HAP-1 (cell line): ENCODE measurements at regions of chr19 and their contacts with region 1.

Region 1: GRCh38 chr19:48588670-48589399 is 17.7 kb upstream of the SPACA4 start:
- DNase-seq: peak; percentile 82 to 96
- H3K4me3 ChIP-seq: peak overlapping the region; percentile 38
- H3K4me1 ChIP-seq: peaks cover 9% of the 10 kb centered on the region
- H3K27me3 ChIP-seq: no peaks in the 10 kb centered on the region

Region 2: GRCh38 chr19:47973529-47973928 is 615.3 kb before region 1 on chr19:
- in situ Hi-C with region 1: loop called (anchors 25 kb)
- DNase-seq: no peak
- H3K4me3 ChIP-seq: no peak overlapping the region
- H3K4me1 ChIP-seq: no peaks in the 10 kb centered on the region
- H3K27me3 ChIP-seq: 0 out of 2 replicates have a peak, but pooled peaks cover 4% of the 10 kb centered on the region

Region 3: GRCh38 chr19:48310227-48310626 is 278.6 kb before region 1 on chr19:
- in situ Hi-C with region 1: loop called (anchors 10 kb)
- DNase-seq: no peak
- H3K4me3 ChIP-seq: no peak overlapping the region
- H3K4me1 ChIP-seq: no peaks in the 10 kb centered on the region
- H3K27me3 ChIP-seq: no peaks in the 10 kb centered on the region

Region 4: DNA sequence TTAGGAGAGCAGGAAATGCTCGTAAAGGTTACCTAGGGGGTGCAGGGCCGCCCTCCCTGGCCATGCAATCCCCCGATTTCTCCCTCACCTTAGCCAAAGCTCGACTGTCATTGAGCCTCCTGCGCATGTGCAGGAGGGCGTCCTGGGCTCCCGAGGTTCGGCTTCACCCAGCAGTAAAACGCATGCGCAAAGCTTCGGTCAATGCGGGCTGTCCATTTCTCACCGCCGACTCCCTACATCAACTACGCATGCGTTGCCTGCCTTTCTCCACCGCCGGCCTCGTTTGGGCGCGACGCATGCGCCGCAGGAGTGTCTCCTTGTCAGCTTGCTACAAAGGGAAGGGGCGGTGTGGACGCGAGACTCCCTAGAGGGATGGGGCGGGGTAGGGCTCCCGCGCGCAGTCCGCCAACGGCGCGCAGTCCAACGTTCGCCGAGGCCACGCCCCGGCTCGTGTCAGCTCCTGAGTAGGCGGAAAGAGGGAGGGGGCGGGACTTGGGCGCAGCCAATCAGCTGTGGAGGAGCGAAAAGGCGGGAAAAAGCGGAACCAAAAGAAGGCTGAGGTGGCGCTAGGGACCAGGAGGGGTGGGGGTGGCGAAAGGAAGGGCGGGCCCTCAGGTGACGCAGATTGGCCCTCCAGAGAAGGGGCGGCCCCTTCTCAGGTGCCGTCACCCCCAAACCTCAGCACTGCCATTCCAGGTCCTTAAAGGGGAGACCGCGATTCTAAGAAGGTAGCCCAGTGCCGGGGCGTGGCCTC is 224.8 kb before region 1 on chr19 and contains the starts of genes SYNGR4 and TMEM143:
- in situ Hi-C with region 1: no loop called
- DNase-seq: peak; percentile 99
- H3K4me3 ChIP-seq: peak within 1 kb of the TSS; percentile 26
- H3K4me1 ChIP-seq: peaks cover 14% of the 10 kb centered on the region
- H3K27me3 ChIP-seq: no peaks in the 10 kb centered on the region

Region 5: DNA sequence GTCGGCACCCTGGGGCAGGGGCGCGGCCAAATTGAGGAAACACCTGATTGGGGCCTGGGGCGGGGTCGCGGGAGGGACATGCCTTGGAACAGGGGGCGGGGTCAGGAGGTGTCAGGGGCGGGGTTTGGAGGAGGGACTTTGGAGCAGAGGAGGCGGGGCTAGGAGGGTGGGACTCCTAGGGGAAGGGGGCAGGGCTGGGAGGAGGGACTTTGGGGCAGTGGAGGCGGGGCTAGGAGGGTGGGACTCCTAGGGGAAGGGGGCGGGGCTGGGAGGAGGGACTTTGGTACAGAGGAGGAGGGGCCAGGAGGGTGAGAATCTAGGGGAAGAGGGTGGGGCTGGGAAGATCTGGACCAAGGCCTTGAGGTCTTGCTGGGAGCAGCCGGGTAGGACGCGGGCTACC is 173.4 kb before region 1 on chr19:
- in situ Hi-C with region 1: no loop called
- DNase-seq: peak; percentile 59 to 94
- H3K4me3 ChIP-seq: no peak overlapping the region
- H3K4me1 ChIP-seq: no peaks in the 10 kb centered on the region
- H3K27me3 ChIP-seq: no peaks in the 10 kb centered on the region

Region 6: GRCh38 chr19:48506138-48506733 is 82.6 kb before region 1 on chr19:
- in situ Hi-C with region 1: loop called (anchors 5 kb)
- DNase-seq: peak in 1 of 2 experiments; percentile 51
- H3K4me3 ChIP-seq: no peak overlapping the region
- H3K4me1 ChIP-seq: peaks cover 3% of the 10 kb centered on the region
- H3K27me3 ChIP-seq: no peaks in the 10 kb centered on the region

Region 7: GRCh38 chr19:48674921-48675824 is 86.3 kb after region 1 on chr19:
- in situ Hi-C with region 1: no loop called
- DNase-seq: peak; percentile 81 to 91
- H3K4me3 ChIP-seq: no peak overlapping the region
- H3K4me1 ChIP-seq: peaks cover 2% of the 10 kb centered on the region; the same call in 1 of the 2 replicates
- H3K27me3 ChIP-seq: no peaks in the 10 kb centered on the region